Left cardiac atrium (tissue), 4 donors: ENCODE measurements at regions of chr12 and their contacts with region 1.

Region 1: DNA sequence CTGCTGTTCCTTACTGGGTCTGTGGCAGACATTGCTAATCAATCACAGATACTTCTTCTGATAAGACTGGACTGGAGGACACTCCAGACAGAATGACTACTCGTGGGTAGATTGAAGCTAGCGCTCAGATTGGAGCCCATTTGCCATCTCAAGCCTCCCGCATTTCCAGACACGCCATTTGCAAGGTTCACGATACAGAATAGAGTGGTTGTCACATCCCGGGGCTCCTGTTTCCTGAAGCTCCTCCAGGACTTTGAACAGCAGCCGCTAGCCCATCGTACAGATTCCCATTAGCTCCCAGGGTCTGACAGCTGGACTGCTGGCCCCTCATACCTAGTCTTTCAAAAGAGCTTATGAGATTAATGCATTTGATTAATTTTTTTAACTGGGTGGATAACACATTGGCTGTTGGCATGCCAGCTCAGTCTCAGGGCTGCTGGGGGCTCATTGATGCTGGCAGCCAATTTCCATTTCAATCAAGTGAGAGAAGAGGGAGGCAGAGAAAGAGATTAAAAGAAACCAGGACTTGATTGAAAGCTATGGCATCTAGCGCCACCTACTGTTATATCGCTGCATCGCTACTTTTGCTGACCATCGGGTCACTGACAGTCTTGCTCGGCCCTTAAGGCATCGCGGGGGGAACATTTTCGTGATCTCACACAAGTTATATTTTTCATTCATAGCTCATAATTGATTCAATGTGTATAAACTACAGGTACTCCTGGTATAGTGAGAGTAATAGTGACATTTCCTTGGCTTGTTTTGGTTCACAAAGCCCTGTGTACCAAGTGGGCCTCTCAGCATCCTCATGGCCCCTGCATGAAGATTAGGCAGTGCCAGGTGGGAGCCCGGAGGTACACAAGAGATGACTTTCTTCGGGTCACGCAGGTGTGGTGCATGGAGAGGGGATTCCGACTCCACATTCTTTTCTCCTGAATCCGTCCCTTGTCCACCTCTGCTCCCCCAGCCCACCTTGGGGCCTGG is 78.6 kb downstream of the CCDC60 start:
- DNase-seq: peak; percentile 61
- ATAC-seq: peak; percentile 70 to 75

Region 2: DNA sequence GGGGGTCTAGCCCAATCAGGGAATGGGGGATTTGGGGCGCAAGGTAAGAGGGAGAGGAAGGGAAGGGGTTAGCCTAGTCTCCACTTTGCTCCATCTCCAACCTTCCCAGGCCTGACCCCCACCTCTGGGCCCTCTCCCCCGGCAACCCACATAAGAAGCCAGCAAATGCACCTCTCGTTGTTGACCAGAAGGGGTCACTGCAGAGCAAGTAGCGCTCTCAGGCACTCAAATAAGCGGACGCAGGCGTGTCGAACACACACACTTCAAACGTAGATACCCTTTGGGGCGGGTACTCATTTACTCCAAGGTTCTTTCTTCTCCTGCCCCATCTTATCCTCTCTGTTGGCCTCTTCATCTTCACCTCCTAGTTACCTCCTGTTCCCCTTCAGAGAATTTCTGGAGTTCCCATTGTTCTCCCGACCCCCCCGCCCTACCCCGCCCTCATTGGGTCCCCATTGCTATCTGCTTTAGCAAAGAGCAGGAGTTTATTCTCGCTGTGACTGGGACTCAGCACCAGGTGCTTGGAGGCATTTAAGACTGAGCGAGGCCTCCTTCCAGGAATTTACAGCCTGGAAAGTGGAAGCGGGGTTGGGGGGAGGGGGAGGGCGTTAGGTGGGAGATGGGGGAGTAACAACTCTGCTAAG is 433.2 kb before region 1 on chr12:
- intact Hi-C with region 1: loop called in 1 of 2 experiments (anchors 5 kb)
- DNase-seq: peak; percentile 35
- ATAC-seq: peak in 1 of 2 donors; percentile 59

Region 3: DNA sequence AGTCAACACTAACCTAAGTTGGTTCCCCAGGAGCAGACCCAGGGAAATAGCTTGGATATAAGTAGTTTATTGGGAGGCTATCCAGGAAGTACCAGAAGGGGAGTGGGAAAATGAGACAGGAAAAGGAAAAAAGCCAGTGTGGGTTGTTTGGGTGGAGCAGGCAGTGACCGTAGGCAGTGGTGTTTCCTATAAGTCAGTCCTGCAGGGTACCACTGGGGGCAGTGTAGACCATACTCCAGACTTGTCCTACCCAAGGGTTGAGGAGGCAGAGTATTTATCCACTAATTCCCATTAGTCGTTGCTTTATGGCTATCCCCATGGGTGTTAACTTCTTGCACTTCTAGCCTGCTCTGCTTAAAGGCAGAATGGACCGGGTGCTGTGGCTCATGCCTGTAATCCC is 85.0 kb before region 1 on chr12:
- intact Hi-C with region 1: loop called in 1 of 2 experiments (anchors 5 kb)
- DNase-seq: peak; percentile 24
- ATAC-seq: peak; percentile 83 to 84

Region 4: DNA sequence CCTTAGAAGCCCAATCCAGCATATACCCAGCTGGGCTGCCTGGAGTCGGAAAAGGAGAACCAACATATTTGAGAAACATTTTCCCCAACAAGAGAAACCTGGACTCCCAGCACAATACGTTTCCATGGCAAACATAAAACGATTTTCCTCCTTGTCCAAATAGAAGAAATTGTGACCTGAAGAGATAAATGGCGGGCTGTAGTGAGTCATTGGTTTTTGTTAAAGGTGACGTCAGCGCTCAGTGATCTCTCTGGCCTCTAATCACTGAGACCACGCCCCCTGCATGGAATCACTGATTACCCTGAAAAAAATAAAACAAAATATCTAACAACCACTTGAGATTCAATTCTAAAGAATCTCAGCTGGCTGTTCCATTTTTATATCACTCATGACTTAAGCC is 72.5 kb before region 1 on chr12:
- intact Hi-C with region 1: no loop called
- DNase-seq: no peak
- ATAC-seq: no peak

Region 5: GRCh38 chr12:119576118-119576810 is 163.2 kb after region 1 on chr12:
- intact Hi-C with region 1: no loop called
- DNase-seq: no peak
- ATAC-seq: no peak